CD14-positive monocyte (primary cell): ENCODE measurements at regions of chr10 and their contacts with region 1.

Region 1: GRCh38 chr10:45420453-45421192 is 46.6 kb downstream of the ALOX5 start:
- DNase-seq: peak; percentile 48 to 67 (median 62)
- H3K4me3 ChIP-seq: peak overlapping the region in 2 of 3 experiments; percentile 6 to 79
- H3K4me3 Mint-ChIP-seq: peak overlapping the region; percentile 89 to 96
- H3K27ac ChIP-seq: peak overlapping the region; percentile 68 to 92
- H3K27ac Mint-ChIP-seq: peak overlapping the region; percentile 93 to 97 (median 95)
- H3K4me1 ChIP-seq: peaks cover 83 to 94% of the 10 kb centered on the region in 2 donors
- H3K4me1 Mint-ChIP-seq: peaks cover 93% of the 10 kb centered on the region
- H3K27me3 ChIP-seq: no peaks in the 10 kb centered on the region
- H3K27me3 Mint-ChIP-seq: peaks cover 0 to 2% (median under 1%) of the 10 kb centered on the region in 3 donors
- CTCF ChIP-seq: no peak

Region 2: DNA sequence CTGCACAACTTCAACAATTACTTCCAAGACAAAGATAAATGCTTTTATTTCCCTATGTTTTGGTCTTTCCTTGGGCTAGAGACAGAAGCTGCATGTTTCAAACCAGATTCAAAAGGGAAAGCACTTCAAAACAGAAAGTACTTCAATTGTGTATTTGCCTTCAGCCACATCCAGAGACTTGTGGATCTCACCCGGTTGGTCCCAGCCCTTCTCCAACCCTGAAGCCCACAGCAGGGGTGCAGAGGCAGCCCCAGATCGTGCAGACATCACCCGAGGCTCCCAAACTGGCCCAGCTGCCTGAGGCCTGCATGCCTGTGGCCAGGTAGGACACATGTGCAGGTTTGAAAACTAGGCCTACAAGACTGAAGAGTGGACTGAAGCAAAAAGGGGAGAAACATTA is 34.2 kb after region 1 on chr10:
- intact Hi-C with region 1: loop called in 1 of 2 experiments (anchors 5 kb)
- DNase-seq: no peak
- H3K4me3 ChIP-seq: no peak overlapping the region
- H3K4me3 Mint-ChIP-seq: no peak overlapping the region
- H3K27ac ChIP-seq: no peak overlapping the region
- H3K27ac Mint-ChIP-seq: peak overlapping the region in 2 of 7 donors; percentile 2 to 37
- H3K4me1 ChIP-seq: peaks cover 6 to 9% of the 10 kb centered on the region in 2 donors
- H3K4me1 Mint-ChIP-seq: peaks cover 21% of the 10 kb centered on the region
- H3K27me3 ChIP-seq: no peaks in the 10 kb centered on the region
- H3K27me3 Mint-ChIP-seq: peaks cover 0 to 2% (median 0%) of the 10 kb centered on the region in 3 donors
- CTCF ChIP-seq: no peak